PC-9 (cell line): ENCODE measurements at regions of chr3 and their contacts with region 1.

Region 1: DNA sequence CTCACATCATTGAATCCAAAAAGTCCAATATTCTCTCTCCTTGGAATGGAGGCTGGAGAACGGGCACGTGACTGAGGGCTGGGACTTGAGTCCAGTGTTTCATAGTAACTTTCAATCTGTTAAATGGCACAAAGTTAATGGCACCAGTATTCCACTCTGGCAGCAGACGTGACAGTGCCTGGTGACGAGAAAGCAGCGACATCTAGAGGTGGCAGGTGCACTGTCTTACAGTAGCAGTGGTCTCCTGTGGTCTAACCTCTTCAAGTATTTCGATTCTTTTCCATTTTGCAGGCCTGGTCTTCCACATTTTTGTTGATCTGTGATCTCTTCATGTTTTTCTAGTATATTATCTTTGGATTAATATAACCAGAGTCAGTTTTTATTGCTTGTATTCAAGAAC is 107.1 kb downstream of the OXSM start:
- DNase-seq: peak in 1 of 2 experiments; percentile 27
- H3K4me3 ChIP-seq: no peak overlapping the region
- H3K27ac ChIP-seq: no peak overlapping the region
- H3K4me1 ChIP-seq: no peaks in the 10 kb centered on the region
- H3K27me3 ChIP-seq: no peaks in the 10 kb centered on the region
- CTCF ChIP-seq: peak; percentile 55; the same call in 1 of the 2 replicates

Region 2: DNA sequence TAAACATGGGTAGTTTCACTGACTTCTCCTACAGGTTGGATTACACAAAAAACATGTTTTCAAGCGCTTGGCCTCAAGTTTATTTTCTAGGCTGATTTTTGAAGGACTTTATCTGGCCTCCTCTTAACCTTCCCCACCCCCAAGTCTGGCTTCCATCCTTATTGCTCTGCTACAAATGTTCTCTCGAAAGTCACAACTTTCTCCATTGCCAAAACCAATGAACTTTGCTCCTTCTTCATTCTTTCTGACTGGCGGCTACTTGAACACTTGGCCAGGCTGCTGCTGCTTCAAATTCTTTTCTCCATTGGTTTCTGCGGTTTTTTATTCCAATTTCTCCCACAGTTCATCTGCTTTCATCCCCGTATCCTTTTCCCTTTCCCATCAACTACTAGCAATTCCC is 338.9 kb before region 1 on chr3:
- CTCF ChIA-PET with region 1: no interaction called
- POLR2A ChIA-PET with region 1: no interaction called
- intact Hi-C with region 1: no loop called
- DNase-seq: no peak
- H3K4me3 ChIP-seq: no peak overlapping the region
- H3K27ac ChIP-seq: no peak overlapping the region
- H3K4me1 ChIP-seq: no peaks in the 10 kb centered on the region
- H3K27me3 ChIP-seq: no peaks in the 10 kb centered on the region
- CTCF ChIP-seq: no peak

Region 3: GRCh38 chr3:26418553-26418952 is 521.5 kb after region 1 on chr3:
- CTCF ChIA-PET with region 1: interaction called, 12 read pairs
- POLR2A ChIA-PET with region 1: no interaction called
- intact Hi-C with region 1: no loop called
- DNase-seq: no peak
- H3K4me3 ChIP-seq: no peak overlapping the region
- H3K27ac ChIP-seq: no peak overlapping the region
- H3K4me1 ChIP-seq: no peaks in the 10 kb centered on the region
- H3K27me3 ChIP-seq: no peaks in the 10 kb centered on the region
- CTCF ChIP-seq: no peak